Naive thymus-derived CD4-positive, alpha-beta T cell (primary cell): ENCODE measurements at regions of chr16 and their contacts with region 1.

Region 1: GRCh38 chr16:68093816-68094613 is 8.8 kb downstream of the NFATC3 start:
- DNase-seq: peak in 7 of 9 donors; percentile 30 to 57 (median 40)
- ATAC-seq: peak; percentile 89
- H3K4me3 ChIP-seq: no peak overlapping the region
- H3K4me3 Mint-ChIP-seq: peak overlapping the region; percentile 28 to 72 (median 58)
- H3K27ac ChIP-seq: peak overlapping the region; percentile 17
- H3K27ac Mint-ChIP-seq: peak overlapping the region; percentile 56 to 92 (median 83)
- H3K4me1 ChIP-seq: peaks cover 74 to 81% of the 10 kb centered on the region in 2 donors
- H3K4me1 Mint-ChIP-seq: peaks cover 64 to 97% (median 84%) of the 10 kb centered on the region in 7 donors
- H3K27me3 ChIP-seq: no peaks in the 10 kb centered on the region
- H3K27me3 Mint-ChIP-seq: no peaks in the 10 kb centered on the region

Region 2: GRCh38 chr16:67951485-67951884 is 142.5 kb before region 1 on chr16:
- CTCF ChIA-PET with region 1: no interaction called
- POLR2A ChIA-PET with region 1: no interaction called
- intact Hi-C with region 1: no loop called
- DNase-seq: no peak
- ATAC-seq: no peak
- H3K4me3 ChIP-seq: no peak overlapping the region
- H3K4me3 Mint-ChIP-seq: no peak overlapping the region
- H3K27ac ChIP-seq: no peak overlapping the region
- H3K27ac Mint-ChIP-seq: no peak overlapping the region
- H3K4me1 ChIP-seq: no peaks in the 10 kb centered on the region
- H3K4me1 Mint-ChIP-seq: peaks cover 0 to 9% (median 0%) of the 10 kb centered on the region in 7 donors
- H3K27me3 ChIP-seq: no peaks in the 10 kb centered on the region
- H3K27me3 Mint-ChIP-seq: no peaks in the 10 kb centered on the region

Region 3: DNA sequence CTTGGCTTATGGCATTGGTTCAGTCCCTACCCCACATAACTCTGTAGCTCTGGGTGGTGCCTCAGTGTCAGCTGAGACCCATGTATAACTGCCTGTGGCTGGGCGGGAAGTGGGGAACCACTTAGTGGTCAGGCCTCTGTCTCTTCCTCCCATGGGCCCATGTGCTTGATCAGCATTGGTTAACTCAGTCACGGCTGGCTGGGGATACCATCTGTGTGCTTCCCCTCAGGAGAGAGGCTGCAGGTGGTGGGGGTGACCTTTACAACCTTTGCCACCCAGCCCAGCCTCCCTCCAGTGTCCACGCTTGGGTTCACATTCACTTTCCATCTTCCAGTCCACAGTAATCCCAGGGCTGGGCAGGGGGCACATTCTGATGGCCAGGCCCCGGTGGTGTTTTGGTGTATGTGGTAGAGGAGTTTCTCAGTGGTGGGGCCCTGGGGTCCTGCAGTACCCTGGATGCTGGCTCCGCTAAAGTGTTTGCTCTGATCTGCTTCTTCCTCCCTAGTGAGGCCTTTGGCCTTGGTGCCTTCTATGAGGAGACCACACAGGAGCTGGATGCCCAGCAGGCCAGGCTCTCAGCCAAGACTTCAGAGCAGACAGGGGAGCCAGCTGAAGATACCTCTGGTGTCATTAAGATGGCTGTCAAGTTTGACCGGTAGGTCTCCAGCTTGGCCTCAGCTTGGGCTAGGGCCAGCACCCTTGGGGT is 19.0 kb before region 1 on chr16:
- CTCF ChIA-PET with region 1: interaction called, 11 read pairs
- POLR2A ChIA-PET with region 1: interaction called, 300 read pairs
- intact Hi-C with region 1: no loop called
- DNase-seq: peak in 2 of 9 donors; percentile 27 to 67
- ATAC-seq: peak; percentile 77
- H3K4me3 ChIP-seq: peak overlapping the region; percentile 9
- H3K4me3 Mint-ChIP-seq: peak overlapping the region; percentile 32 to 79 (median 53)
- H3K27ac ChIP-seq: no peak overlapping the region
- H3K27ac Mint-ChIP-seq: peak overlapping the region; percentile 14 to 90 (median 76)
- H3K4me1 ChIP-seq: peaks cover 75 to 88% of the 10 kb centered on the region in 2 donors
- H3K4me1 Mint-ChIP-seq: peaks cover 69 to 89% (median 86%) of the 10 kb centered on the region in 7 donors
- H3K27me3 ChIP-seq: no peaks in the 10 kb centered on the region
- H3K27me3 Mint-ChIP-seq: no peaks in the 10 kb centered on the region

Region 4: DNA sequence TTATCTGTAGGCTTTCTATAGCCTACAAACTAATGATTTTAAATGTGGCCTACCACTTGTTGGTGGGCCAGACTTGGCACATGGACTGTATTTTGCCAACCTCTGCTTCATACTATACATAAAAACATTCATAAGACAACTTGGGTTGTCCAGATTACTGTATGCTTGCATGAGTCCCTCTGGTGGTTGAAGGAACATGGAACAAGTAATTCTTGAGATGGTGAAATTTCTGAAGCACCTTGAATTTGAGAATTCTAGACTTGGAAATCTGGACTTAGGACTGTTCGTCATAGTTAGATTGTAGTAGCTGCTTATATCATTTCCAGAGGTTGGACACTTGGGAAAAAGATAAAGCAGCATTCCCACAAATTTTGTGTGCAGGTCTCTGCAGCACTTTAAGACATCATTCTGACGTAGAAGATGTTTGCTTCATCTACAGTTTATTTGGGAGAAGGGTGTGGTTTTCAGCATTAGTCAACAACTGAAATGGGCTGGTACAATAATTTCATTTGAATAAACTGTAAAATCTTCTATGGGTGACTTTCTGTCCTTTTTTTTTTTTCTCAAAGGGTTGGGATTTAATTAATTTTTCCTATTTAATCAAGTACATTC is 22.3 kb after region 1 on chr16:
- CTCF ChIA-PET with region 1: interaction called, 18 read pairs
- POLR2A ChIA-PET with region 1: interaction called, 5 read pairs
- intact Hi-C with region 1: loop called (anchors 1 to 2 kb)
- DNase-seq: peak in 7 of 9 donors; percentile 11 to 38 (median 19)
- ATAC-seq: peak; percentile 73
- H3K4me3 ChIP-seq: no peak overlapping the region
- H3K4me3 Mint-ChIP-seq: peak overlapping the region in 7 of 10 donors; percentile 3 to 60 (median 52)
- H3K27ac ChIP-seq: peak overlapping the region; percentile 11
- H3K27ac Mint-ChIP-seq: peak overlapping the region in 6 of 9 donors; percentile 28 to 77 (median 57)
- H3K4me1 ChIP-seq: peaks cover 36 to 50% of the 10 kb centered on the region in 2 donors
- H3K4me1 Mint-ChIP-seq: peaks cover 48 to 97% (median 82%) of the 10 kb centered on the region in 7 donors
- H3K27me3 ChIP-seq: no peaks in the 10 kb centered on the region
- H3K27me3 Mint-ChIP-seq: no peaks in the 10 kb centered on the region

Region 5: DNA sequence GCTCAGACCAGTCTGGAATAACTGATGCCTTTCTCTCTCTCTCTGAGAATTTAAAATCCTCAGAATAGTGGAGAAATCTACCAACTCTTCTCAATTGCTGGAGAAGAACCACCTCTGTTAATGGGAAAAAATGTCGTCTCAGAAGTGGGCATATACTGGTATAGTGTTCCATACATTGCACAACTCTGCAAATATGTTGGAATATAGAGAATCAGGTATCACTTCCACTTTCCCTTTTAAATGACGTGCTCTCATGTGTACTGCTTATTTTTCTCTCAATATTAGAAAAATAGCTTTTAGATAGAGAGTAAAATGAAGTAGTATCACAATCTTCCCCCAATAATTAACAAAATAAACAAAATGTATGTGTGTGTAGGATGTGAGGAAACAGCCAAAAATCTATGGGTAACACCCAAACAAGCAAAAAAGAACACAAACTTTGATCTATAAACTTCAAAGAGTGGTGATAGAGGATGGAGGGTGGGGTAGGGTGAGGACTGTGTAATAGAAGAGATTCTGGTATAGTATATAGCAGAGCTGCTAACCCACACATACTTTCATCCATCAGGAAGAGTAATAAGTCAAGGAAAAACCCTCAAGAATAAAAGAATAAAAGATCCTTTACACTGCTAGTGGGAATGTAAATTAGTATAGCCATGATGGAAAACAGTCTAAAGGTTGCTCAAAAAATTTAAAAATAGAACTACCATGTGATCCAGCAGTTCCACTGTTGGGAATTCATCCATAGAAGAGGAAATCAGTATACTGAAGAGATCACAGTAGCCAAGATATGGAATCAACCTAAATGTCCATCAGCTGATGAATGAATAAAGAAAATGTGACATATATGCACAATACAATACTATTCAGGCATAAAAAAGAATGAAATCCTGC is 38.0 kb after region 1 on chr16:
- CTCF ChIA-PET with region 1: interaction called, 5 read pairs
- POLR2A ChIA-PET with region 1: no interaction called
- intact Hi-C with region 1: loop called (anchors 5 kb)
- DNase-seq: peak in 7 of 9 donors; percentile 37 to 69 (median 48)
- ATAC-seq: peak; percentile 91
- H3K4me3 ChIP-seq: no peak overlapping the region
- H3K4me3 Mint-ChIP-seq: peak overlapping the region; percentile 6 to 72 (median 59)
- H3K27ac ChIP-seq: peak overlapping the region; percentile 50
- H3K27ac Mint-ChIP-seq: peak overlapping the region; percentile 45 to 90 (median 82)
- H3K4me1 ChIP-seq: peaks cover 16 to 29% of the 10 kb centered on the region in 2 donors
- H3K4me1 Mint-ChIP-seq: peaks cover 45 to 73% (median 62%) of the 10 kb centered on the region in 7 donors
- H3K27me3 ChIP-seq: no peaks in the 10 kb centered on the region
- H3K27me3 Mint-ChIP-seq: no peaks in the 10 kb centered on the region

Region 6: DNA sequence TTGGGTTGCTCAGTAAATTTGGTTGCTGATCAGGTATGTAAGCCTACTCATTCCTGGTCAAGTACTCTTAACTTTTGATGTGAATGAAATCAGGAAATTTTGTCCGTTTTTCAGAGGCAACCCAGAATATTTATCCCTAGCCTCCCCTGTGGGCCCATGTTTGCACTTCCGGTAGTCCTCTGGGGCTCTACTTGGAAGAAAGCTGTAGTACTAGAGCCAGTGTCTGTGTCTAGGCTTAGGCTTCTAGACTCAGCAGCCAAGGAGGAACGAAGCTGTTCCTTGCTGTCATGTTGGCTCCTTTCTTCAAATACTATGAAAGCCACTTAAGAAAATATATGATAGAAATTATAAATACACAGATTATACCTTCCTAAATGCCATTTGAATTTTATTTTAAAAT is 120.7 kb after region 1 on chr16:
- CTCF ChIA-PET with region 1: interaction called, 4 read pairs
- POLR2A ChIA-PET with region 1: no interaction called
- intact Hi-C with region 1: loop called in 1 of 2 experiments (anchors 5 kb)
- DNase-seq: no peak
- ATAC-seq: no peak
- H3K4me3 ChIP-seq: no peak overlapping the region
- H3K4me3 Mint-ChIP-seq: no peak overlapping the region
- H3K27ac ChIP-seq: peak overlapping the region; percentile 17
- H3K27ac Mint-ChIP-seq: peak overlapping the region; percentile 56 to 97 (median 79)
- H3K4me1 ChIP-seq: peaks cover 0 to 22% of the 10 kb centered on the region in 2 donors
- H3K4me1 Mint-ChIP-seq: peaks cover 31 to 66% (median 53%) of the 10 kb centered on the region in 7 donors
- H3K27me3 ChIP-seq: no peaks in the 10 kb centered on the region
- H3K27me3 Mint-ChIP-seq: no peaks in the 10 kb centered on the region

Region 7: GRCh38 chr16:68328151-68328859 is 234.3 kb after region 1 on chr16:
- CTCF ChIA-PET with region 1: interaction called, 3 read pairs
- POLR2A ChIA-PET with region 1: no interaction called
- intact Hi-C with region 1: loop called in 1 of 2 experiments (anchors 1 kb)
- DNase-seq: peak; percentile 52 to 81 (median 77)
- ATAC-seq: peak; percentile 99
- H3K4me3 ChIP-seq: no peak overlapping the region
- H3K4me3 Mint-ChIP-seq: no peak overlapping the region
- H3K27ac ChIP-seq: no peak overlapping the region
- H3K27ac Mint-ChIP-seq: peak overlapping the region in 4 of 9 donors; percentile 0 to 57 (median 9)
- H3K4me1 ChIP-seq: peaks cover 0 to 16% of the 10 kb centered on the region in 2 donors
- H3K4me1 Mint-ChIP-seq: peaks cover 16 to 28% (median 19%) of the 10 kb centered on the region in 7 donors
- H3K27me3 ChIP-seq: no peaks in the 10 kb centered on the region
- H3K27me3 Mint-ChIP-seq: no peaks in the 10 kb centered on the region